B cell (primary cell): ENCODE measurements at regions of chr14 and their contacts with region 1.

Region 1: DNA sequence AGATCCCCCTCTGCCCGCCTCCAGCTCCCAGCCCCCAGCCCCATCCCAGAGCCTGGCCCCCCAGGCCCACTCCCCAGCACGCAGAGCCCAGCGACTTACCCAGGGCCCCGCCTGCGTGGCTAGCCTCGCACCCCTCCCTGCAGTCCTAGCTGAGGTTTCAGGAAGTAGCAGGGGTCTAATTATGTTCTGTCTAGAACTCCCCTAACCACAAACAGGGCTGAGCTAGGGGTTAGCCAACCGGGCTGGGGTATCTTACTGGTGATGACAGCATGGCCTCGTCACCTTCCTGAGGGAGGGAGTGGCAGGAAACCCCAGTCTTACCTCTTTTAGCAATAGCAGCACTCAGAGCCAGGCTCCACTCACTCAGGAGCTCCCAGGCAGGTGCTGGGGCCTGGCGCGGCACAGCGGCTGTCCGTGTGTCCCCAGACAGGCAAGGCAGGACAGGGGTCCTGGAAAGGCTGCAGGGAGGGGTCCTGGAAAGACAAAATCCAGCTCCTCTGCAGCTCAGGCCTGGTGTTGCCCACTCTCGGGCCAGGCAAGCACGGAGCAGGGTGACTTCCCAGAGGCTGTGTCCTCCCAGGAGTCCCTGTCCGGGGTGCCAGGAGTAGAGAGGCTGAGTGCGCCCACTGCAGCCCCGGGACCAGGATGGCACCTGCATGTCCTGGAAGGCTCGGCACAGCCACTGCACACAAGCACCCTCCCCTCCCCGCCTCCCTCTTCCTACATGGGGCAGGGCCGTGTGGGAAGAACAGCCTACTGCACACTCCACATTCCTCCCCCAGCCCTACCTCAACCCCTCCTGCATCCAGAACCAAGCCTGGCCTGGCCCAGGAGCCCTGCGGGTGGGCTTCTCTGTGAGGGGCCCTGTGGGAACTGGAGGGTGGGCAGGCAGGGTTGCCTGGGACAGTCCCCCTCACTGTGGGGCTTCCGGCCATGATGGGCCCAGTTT is at the start of gene GPR132:
- DNase-seq: peak; percentile 96
- ATAC-seq: peak; percentile 78
- H3K4me3 ChIP-seq: peak within 1 kb of the TSS; percentile 81 to 100 (median 91)
- H3K4me3 Mint-ChIP-seq: peak within 1 kb of the TSS; percentile 87
- H3K27ac ChIP-seq: peak within 1 kb of the TSS; percentile 93 to 98
- H3K27ac Mint-ChIP-seq: peak within 1 kb of the TSS; percentile 98
- H3K4me1 ChIP-seq: peaks cover 79 to 95% of the 10 kb centered on the region in 2 donors
- H3K4me1 Mint-ChIP-seq: peaks cover 82% of the 10 kb centered on the region
- H3K27me3 ChIP-seq: no peaks in the 10 kb centered on the region
- H3K27me3 Mint-ChIP-seq: no peaks in the 10 kb centered on the region
- CTCF ChIP-seq: no peak
- total RNA-seq, gene GPR132: 54.5 and 63.2 TPM in 2 replicates

Region 2: GRCh38 chr14:105075379-105076295 is 10.1 kb after region 1 on chr14:
- CTCF ChIA-PET with region 1: interaction called, 23 read pairs
- POLR2A ChIA-PET with region 1: interaction called, 9 read pairs
- intact Hi-C with region 1: loop called (anchors 1 kb)
- DNase-seq: peak; percentile 75
- ATAC-seq: peak; percentile 80
- H3K4me3 ChIP-seq: peak overlapping the region in 3 of 5 experiments; percentile 4 to 25 (median 17)
- H3K4me3 Mint-ChIP-seq: peak overlapping the region; percentile 16
- H3K27ac ChIP-seq: no peak overlapping the region
- H3K27ac Mint-ChIP-seq: peak overlapping the region; percentile 59
- H3K4me1 ChIP-seq: peaks cover 39 to 47% of the 10 kb centered on the region in 2 donors
- H3K4me1 Mint-ChIP-seq: peaks cover 40% of the 10 kb centered on the region
- H3K27me3 ChIP-seq: no peaks in the 10 kb centered on the region
- H3K27me3 Mint-ChIP-seq: no peaks in the 10 kb centered on the region
- CTCF ChIP-seq: no peak